Naive thymus-derived CD4-positive, alpha-beta T cell (primary cell): ENCODE measurements at regions of chrX and their contacts with region 1.

Region 1: GRCh38 chrX:132022967-132023895 is at the start of gene STK26:
- DNase-seq: peak; percentile 55 to 83 (median 78)
- ATAC-seq: peak; percentile 93
- H3K4me3 ChIP-seq: peak within 1 kb of the TSS; percentile 72
- H3K4me3 Mint-ChIP-seq: peak within 1 kb of the TSS; percentile 90 to 98 (median 94)
- H3K27ac ChIP-seq: peak within 1 kb of the TSS; percentile 86
- H3K27ac Mint-ChIP-seq: peak within 1 kb of the TSS; percentile 71 to 95 (median 93)
- H3K4me1 ChIP-seq: peaks cover 15 to 19% of the 10 kb centered on the region in 2 donors
- H3K4me1 Mint-ChIP-seq: peaks cover 17 to 43% (median 39%) of the 10 kb centered on the region in 7 donors
- H3K27me3 ChIP-seq: no peaks in the 10 kb centered on the region
- H3K27me3 Mint-ChIP-seq: no peaks in the 10 kb centered on the region
- total RNA-seq, gene STK26: 29.7 to 50.1 (median 45.1) TPM

Region 2: GRCh38 chrX:131830400-131831184 is 192.6 kb before region 1 on chrX:
- CTCF ChIA-PET with region 1: no interaction called
- POLR2A ChIA-PET with region 1: no interaction called
- intact Hi-C with region 1: loop called (anchors 1 kb)
- DNase-seq: peak in 8 of 9 donors; percentile 59 to 83 (median 72)
- ATAC-seq: peak; percentile 76
- H3K4me3 ChIP-seq: peak overlapping the region; percentile 37
- H3K4me3 Mint-ChIP-seq: peak overlapping the region; percentile 61 to 90 (median 72)
- H3K27ac ChIP-seq: peak overlapping the region; percentile 55
- H3K27ac Mint-ChIP-seq: peak overlapping the region; percentile 42 to 91 (median 81)
- H3K4me1 ChIP-seq: peaks cover 0 to 14% of the 10 kb centered on the region in 2 donors
- H3K4me1 Mint-ChIP-seq: peaks cover 1 to 44% (median 35%) of the 10 kb centered on the region in 7 donors
- H3K27me3 ChIP-seq: no peaks in the 10 kb centered on the region
- H3K27me3 Mint-ChIP-seq: no peaks in the 10 kb centered on the region

Region 3: GRCh38 chrX:131987252-131987651 is 36.0 kb before region 1 on chrX:
- CTCF ChIA-PET with region 1: interaction called, 4 read pairs
- POLR2A ChIA-PET with region 1: interaction called, 12 read pairs
- intact Hi-C with region 1: loop called (anchors 1 kb)
- DNase-seq: peak in 7 of 9 donors; percentile 53 to 82 (median 72)
- ATAC-seq: peak; percentile 97
- H3K4me3 ChIP-seq: peak overlapping the region; percentile 19
- H3K4me3 Mint-ChIP-seq: peak overlapping the region; percentile 34 to 83 (median 74)
- H3K27ac ChIP-seq: peak overlapping the region; percentile 57
- H3K27ac Mint-ChIP-seq: peak overlapping the region; percentile 88 to 100 (median 97)
- H3K4me1 ChIP-seq: peaks cover 33 to 58% of the 10 kb centered on the region in 2 donors
- H3K4me1 Mint-ChIP-seq: peaks cover 38 to 86% (median 62%) of the 10 kb centered on the region in 7 donors
- H3K27me3 ChIP-seq: no peaks in the 10 kb centered on the region
- H3K27me3 Mint-ChIP-seq: no peaks in the 10 kb centered on the region

Region 4: DNA sequence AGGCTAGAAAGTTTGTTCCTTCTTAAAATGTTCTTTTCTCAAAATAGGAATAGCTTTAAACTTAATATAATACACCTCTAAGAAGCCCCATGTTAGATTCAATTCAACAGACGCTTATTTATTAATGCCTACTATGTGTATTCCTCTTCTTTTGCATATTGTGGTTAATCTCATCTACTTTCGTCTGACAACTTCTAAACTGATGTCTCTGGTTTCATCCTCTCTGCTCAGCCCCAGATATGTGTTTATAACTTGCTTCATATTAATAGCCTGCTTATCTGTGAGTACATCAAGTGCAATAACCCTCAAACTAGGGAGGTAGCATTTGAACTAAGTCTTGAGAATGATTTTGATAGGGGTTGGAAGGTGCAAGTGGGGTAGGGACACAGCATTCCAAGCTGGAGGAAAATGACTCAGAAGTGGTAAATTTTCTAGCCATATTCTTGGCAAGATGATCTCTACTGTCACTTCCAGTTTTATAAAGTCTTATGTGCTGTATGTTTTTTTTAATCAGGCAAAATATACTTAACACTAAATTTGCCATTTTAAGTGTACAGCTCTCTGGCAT is 36.8 kb after region 1 on chrX:
- CTCF ChIA-PET with region 1: no interaction called
- POLR2A ChIA-PET with region 1: interaction called, 5 read pairs
- intact Hi-C with region 1: loop called in 1 of 2 experiments (anchors 5 kb)
- DNase-seq: no peak
- ATAC-seq: no peak
- H3K4me3 ChIP-seq: no peak overlapping the region
- H3K4me3 Mint-ChIP-seq: no peak overlapping the region
- H3K27ac ChIP-seq: no peak overlapping the region
- H3K27ac Mint-ChIP-seq: peak overlapping the region in 4 of 9 donors; percentile 2 to 57 (median 51)
- H3K4me1 ChIP-seq: no peaks in the 10 kb centered on the region
- H3K4me1 Mint-ChIP-seq: peaks cover 0 to 42% (median 20%) of the 10 kb centered on the region in 7 donors
- H3K27me3 ChIP-seq: no peaks in the 10 kb centered on the region
- H3K27me3 Mint-ChIP-seq: no peaks in the 10 kb centered on the region

Region 5: GRCh38 chrX:132488819-132489577 is 465.8 kb after region 1 on chrX and contains the start of gene MBNL3:
- CTCF ChIA-PET with region 1: no interaction called
- POLR2A ChIA-PET with region 1: no interaction called
- intact Hi-C with region 1: loop called (anchors 2 kb)
- DNase-seq: peak; percentile 35 to 78 (median 70)
- ATAC-seq: peak; percentile 77
- H3K4me3 ChIP-seq: peak within 1 kb of the TSS; percentile 82
- H3K4me3 Mint-ChIP-seq: peak within 1 kb of the TSS; percentile 93 to 99 (median 96)
- H3K27ac ChIP-seq: peak within 1 kb of the TSS; percentile 83
- H3K27ac Mint-ChIP-seq: peak within 1 kb of the TSS; percentile 78 to 98 (median 94)
- H3K4me1 ChIP-seq: peaks cover 4 to 15% of the 10 kb centered on the region in 2 donors
- H3K4me1 Mint-ChIP-seq: peaks cover 16 to 59% (median 44%) of the 10 kb centered on the region in 7 donors
- H3K27me3 ChIP-seq: no peaks in the 10 kb centered on the region
- H3K27me3 Mint-ChIP-seq: peaks cover 0 to 10% (median 0%) of the 10 kb centered on the region in 5 donors
- total RNA-seq, gene MBNL3: 20.8 to 34.0 (median 29.7) TPM

Region 6: DNA sequence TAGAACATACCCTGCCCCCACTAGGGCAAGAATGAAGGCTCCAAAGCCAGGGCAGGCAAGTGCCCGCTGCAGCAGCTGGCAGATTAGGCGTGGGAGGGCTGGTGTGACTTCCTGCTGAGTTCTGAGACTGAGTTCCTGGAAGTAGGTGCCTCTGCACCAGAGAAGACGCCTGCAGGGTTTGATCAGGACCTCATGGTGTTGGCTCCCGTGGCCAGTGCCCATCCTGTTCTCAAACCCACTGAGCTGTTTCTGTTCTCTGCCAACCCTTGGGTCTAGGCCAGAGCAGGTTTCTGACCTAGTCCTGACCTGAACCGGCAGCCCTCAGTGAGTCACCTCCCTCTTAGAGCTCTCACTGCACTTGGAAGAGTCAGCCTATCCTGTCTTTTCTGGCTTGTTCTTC is 714.5 kb after region 1 on chrX:
- CTCF ChIA-PET with region 1: no interaction called
- POLR2A ChIA-PET with region 1: no interaction called
- intact Hi-C with region 1: no loop called
- DNase-seq: peak in 6 of 9 donors; percentile 1 to 20 (median 3)
- ATAC-seq: peak; percentile 40
- H3K4me3 ChIP-seq: no peak overlapping the region
- H3K4me3 Mint-ChIP-seq: peak overlapping the region in 6 of 10 donors; percentile 34 to 58 (median 53)
- H3K27ac ChIP-seq: no peak overlapping the region
- H3K27ac Mint-ChIP-seq: no peak overlapping the region
- H3K4me1 ChIP-seq: peaks cover 0 to 11% of the 10 kb centered on the region in 2 donors
- H3K4me1 Mint-ChIP-seq: peaks cover 6 to 34% (median 19%) of the 10 kb centered on the region in 7 donors
- H3K27me3 ChIP-seq: no peaks in the 10 kb centered on the region
- H3K27me3 Mint-ChIP-seq: no peaks in the 10 kb centered on the region